ENCODE measurements at regions of chr16 and their contacts with region 1.

Region 1: DNA sequence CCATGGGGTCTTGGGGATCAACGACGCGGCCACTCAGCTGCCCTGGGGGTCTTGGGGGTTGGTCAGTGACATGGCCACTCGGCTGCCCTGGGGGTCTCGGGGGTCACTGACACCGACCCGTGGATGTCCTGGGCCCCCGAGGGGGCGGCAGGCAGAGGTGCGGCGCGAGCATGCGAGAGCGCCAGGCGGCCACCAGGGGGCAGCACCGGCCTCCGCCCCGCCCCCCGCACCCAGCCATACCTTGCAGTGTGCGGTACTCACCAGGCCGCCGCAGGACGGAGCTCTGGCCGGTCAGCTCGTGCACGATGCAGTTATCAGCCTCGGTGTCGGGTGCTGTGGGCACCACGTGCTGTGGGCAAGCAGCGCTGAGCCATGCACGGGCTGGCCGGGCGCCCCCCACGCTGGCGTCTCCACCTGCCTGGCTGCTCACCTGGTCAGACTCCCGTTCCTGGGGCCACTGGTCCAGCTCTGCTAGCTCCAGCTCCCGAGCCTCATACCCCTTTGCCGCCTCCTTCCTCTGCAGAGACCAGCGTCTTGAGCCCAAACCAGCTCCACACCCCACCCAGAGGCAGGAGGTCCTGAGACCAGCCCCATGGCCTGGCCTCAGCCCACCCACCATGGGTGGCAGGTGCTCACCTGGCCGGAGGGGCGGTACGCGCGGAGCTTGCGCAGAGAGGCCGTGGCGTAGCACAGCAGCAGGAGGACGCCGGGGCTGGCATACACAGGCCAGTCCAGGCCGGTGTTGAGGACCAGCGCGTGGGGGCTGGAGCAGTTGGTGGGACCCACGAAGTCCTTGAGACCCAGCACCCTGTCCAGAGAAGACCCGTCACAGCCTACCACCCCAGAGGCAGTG is 31.2 kb downstream of the CTU2 start:
- DNase-seq: peak; percentile 94
- H3K4me3 ChIP-seq: no peak overlapping the region; a peak in 1 of 4 replicates
- H3K27ac ChIP-seq: no peak overlapping the region
- H3K4me1 ChIP-seq: peaks cover 0 to 4% of the 10 kb centered on the region in 2 experiments; a peak in 1 of 4 replicates
- H3K27me3 ChIP-seq: no peaks in the 10 kb centered on the region
- CTCF ChIP-seq: peak; percentile 88
- EP300 ChIP-seq: no peak
- RAD21 ChIP-seq: peak; percentile 56

Region 2: GRCh38 chr16:88706965-88707826 is 30.3 kb before region 1 on chr16:
- CTCF ChIA-PET with region 1: interaction called, 12 read pairs
- POLR2A ChIA-PET with region 1: no interaction called
- DNase-seq: no peak
- H3K4me3 ChIP-seq: peak overlapping the region; percentile 94 to 99
- H3K27ac ChIP-seq: peak overlapping the region in 1 of 2 experiments; percentile 30; a peak in 1 of 4 replicates
- H3K4me1 ChIP-seq: peaks cover 0 to 16% of the 10 kb centered on the region in 2 experiments; a peak in 2 of 4 replicates
- H3K27me3 ChIP-seq: no peaks in the 10 kb centered on the region
- CTCF ChIP-seq: no peak
- EP300 ChIP-seq: no peak
- RAD21 ChIP-seq: no peak

Region 3: GRCh38 chr16:88719267-88719932 is 18.1 kb before region 1 on chr16:
- CTCF ChIA-PET with region 1: interaction called, 28 read pairs
- POLR2A ChIA-PET with region 1: no interaction called
- DNase-seq: no peak
- H3K4me3 ChIP-seq: no peak overlapping the region
- H3K27ac ChIP-seq: no peak overlapping the region
- H3K4me1 ChIP-seq: no peaks in the 10 kb centered on the region; a peak in 1 of 4 replicates
- H3K27me3 ChIP-seq: no peaks in the 10 kb centered on the region
- CTCF ChIP-seq: no peak
- EP300 ChIP-seq: no peak
- RAD21 ChIP-seq: no peak

Region 4: GRCh38 chr16:88803264-88803987 is 65.9 kb after region 1 on chr16 and contains the start of gene CDT1:
- CTCF ChIA-PET with region 1: interaction called, 13 read pairs
- POLR2A ChIA-PET with region 1: no interaction called
- DNase-seq: peak; percentile 100
- H3K4me3 ChIP-seq: peak within 1 kb of the TSS; percentile 74 to 86
- H3K27ac ChIP-seq: peak within 1 kb of the TSS in 1 of 2 experiments; percentile 64; a peak in 1 of 4 replicates
- H3K4me1 ChIP-seq: peaks cover 0 to 15% of the 10 kb centered on the region in 2 experiments; a peak in 1 of 4 replicates
- H3K27me3 ChIP-seq: no peaks in the 10 kb centered on the region
- CTCF ChIP-seq: no peak
- EP300 ChIP-seq: no peak
- RAD21 ChIP-seq: 0 out of 2 replicates have a peak, but pooled peaks have one; percentile 6
- polyA plus RNA-seq, gene CDT1: 3.1 and 6.1 TPM in 2 replicates

Region 5: GRCh38 chr16:88811769-88812512 is 74.4 kb after region 1 on chr16 and contains the start of gene APRT:
- CTCF ChIA-PET with region 1: interaction called, 18 read pairs
- POLR2A ChIA-PET with region 1: no interaction called
- DNase-seq: peak; percentile 99
- H3K4me3 ChIP-seq: peak within 1 kb of the TSS; percentile 73 to 74
- H3K27ac ChIP-seq: peak within 1 kb of the TSS; percentile 79 to 91
- H3K4me1 ChIP-seq: peaks cover 10 to 29% of the 10 kb centered on the region in 2 experiments; a peak in 2 of 4 replicates
- H3K27me3 ChIP-seq: no peaks in the 10 kb centered on the region
- CTCF ChIP-seq: peak; percentile 36
- EP300 ChIP-seq: no peak
- RAD21 ChIP-seq: peak; percentile 53
- polyA plus RNA-seq, gene APRT: 178 and 192 TPM in 2 replicates

Region 6: DNA sequence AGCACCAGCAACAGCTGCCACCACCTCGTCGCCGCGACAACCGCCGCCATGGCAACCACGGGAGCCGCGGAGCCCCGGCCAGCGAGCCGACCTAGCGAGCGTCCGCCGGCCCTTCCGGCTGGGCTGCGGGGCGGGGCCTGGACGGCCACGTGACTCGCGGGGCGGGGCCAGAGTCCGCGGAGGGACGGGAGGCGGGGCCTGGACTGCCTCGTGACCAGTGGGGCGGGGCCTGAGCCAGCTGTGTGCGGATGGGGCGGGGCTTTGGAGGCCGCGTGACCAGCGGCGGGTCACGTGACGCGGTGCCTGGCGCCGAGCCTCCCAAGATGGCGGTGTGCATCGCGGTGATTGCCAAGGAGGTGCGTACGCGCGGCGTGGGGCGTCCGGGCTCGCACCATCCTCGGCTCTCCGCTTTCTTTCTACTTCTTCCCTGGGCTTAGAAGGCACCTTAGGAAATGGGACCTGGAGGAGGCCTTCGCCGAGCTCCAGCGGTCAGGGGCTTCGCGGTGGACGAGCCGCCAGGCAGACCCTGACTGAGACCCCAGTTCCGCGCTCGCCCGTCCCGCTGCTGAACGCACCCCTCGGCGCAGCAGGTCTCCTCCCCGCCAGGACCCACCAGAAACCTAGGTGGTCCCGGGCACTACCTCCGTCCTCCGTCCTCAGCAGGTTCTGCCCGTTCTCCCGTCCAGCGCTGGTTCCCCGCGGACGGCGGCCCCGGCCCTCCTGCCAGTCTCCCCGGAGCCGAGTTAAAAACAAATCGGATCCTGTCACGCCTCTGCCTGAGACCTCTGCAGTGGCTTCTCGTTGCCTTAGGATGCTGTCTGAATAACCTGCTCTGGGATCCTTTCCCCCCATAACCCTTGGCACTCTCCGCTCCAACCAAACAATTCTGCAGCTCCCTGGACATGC is 119.6 kb after region 1 on chr16 and contains the starts of genes GALNS and TRAPPC2L:
- CTCF ChIA-PET with region 1: interaction called, 20 read pairs
- POLR2A ChIA-PET with region 1: no interaction called
- DNase-seq: peak; percentile 100
- H3K4me3 ChIP-seq: peak within 1 kb of the TSS; percentile 90 to 98
- H3K27ac ChIP-seq: peak within 1 kb of the TSS; percentile 39 to 75; a peak in 2 of 4 replicates
- H3K4me1 ChIP-seq: peaks cover 5 to 15% of the 10 kb centered on the region in 2 experiments; a peak in 1 of 4 replicates
- H3K27me3 ChIP-seq: no peaks in the 10 kb centered on the region
- CTCF ChIP-seq: no peak
- EP300 ChIP-seq: no peak
- RAD21 ChIP-seq: no peak
- polyA plus RNA-seq, gene GALNS: 13.8 and 16.5 TPM in 2 replicates
- polyA plus RNA-seq, gene TRAPPC2L: 73.9 and 74.4 TPM in 2 replicates

Region 7: DNA sequence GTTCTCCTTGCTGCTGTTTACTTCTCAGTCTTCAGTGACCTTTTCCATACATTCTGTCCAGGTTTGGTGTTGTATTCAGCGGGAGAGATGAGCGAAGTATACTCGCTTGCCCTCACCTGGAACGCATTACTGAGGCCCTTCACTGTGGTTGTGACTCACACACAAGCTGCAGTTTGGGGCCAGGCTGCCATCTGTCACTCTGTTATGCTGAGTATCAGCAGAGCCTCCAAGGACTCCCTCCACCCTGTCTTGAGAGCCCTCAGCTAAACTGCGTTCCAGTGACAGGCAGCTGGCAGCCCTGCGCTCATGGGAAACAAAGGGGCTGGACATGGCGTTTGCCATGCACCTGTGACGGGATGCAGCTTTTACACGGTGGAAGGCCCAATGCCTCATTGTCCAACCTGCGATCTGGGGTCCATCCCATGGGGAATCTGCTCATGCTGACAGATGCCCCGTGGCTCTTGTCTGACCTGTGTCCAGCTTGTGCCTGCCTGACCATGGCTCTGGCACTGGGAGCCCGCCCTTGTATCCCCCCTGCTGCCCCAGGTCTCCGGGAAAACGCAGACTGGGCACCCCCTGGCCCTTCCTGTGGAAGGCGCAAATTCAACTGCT is 473.5 kb after region 1 on chr16:
- CTCF ChIA-PET with region 1: interaction called, 10 read pairs
- POLR2A ChIA-PET with region 1: no interaction called
- DNase-seq: peak; percentile 33
- H3K4me3 ChIP-seq: no peak overlapping the region
- H3K27ac ChIP-seq: no peak overlapping the region
- H3K4me1 ChIP-seq: peaks cover 0 to 5% of the 10 kb centered on the region in 2 experiments; a peak in 1 of 4 replicates
- H3K27me3 ChIP-seq: peaks cover 40% of the 10 kb centered on the region
- CTCF ChIP-seq: no peak
- EP300 ChIP-seq: no peak
- RAD21 ChIP-seq: no peak